H1 (cell line): ENCODE measurements at regions of chr12 and their contacts with region 1.

Region 1: GRCh38 chr12:54993161-54993835 is 8.7 kb upstream of the TESPA1 start:
- DNase-seq: peak in 1 of 2 experiments; percentile 55
- H3K4me3 ChIP-seq: no peak overlapping the region
- H3K27ac ChIP-seq: no peak overlapping the region
- H3K4me1 ChIP-seq: peaks cover 1 to 11% (median 7%) of the 10 kb centered on the region in 4 experiments; a peak in 5 of 7 replicates
- H3K27me3 ChIP-seq: no peaks in the 10 kb centered on the region
- CTCF ChIP-seq: peak in 2 of 3 experiments; percentile 75 to 88; a peak in 3 of 4 replicates
- EP300 ChIP-seq: no peak
- POLR2A ChIP-seq: no peak
- RAD21 ChIP-seq: peak; percentile 94 to 97

Region 2: GRCh38 chr12:54749191-54749818 is 244.0 kb before region 1 on chr12:
- CTCF ChIA-PET with region 1: interaction called, 24 read pairs
- POLR2A ChIA-PET with region 1: no interaction called
- DNase-seq: no peak
- H3K4me3 ChIP-seq: no peak overlapping the region
- H3K27ac ChIP-seq: no peak overlapping the region
- H3K4me1 ChIP-seq: no peaks in the 10 kb centered on the region
- H3K27me3 ChIP-seq: no peaks in the 10 kb centered on the region
- CTCF ChIP-seq: peak in 2 of 3 experiments; percentile 52 to 71; a peak in 2 of 4 replicates
- EP300 ChIP-seq: no peak
- POLR2A ChIP-seq: no peak
- RAD21 ChIP-seq: peak; percentile 79 to 81

Region 3: DNA sequence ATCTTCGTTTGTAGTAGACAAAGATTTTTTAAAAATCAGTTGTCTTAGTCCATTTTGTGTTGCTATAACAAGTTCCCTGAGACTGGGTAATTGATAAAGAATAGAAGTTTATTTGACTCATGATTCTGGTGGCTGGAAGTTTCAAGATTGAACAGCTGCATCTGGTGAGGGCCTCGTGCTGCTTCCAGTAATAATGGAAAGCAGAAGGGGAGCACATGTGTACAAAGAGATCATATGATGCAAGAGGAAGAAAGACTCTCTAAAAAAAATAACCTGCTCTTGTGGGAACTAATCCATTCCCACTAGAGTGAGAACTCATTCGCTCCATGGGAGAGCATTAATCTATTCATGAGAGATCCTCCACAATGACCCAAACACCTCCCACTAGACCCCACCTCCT is 114.1 kb before region 1 on chr12:
- CTCF ChIA-PET with region 1: no interaction called
- POLR2A ChIA-PET with region 1: no interaction called
- DNase-seq: no peak
- H3K4me3 ChIP-seq: no peak overlapping the region
- H3K27ac ChIP-seq: no peak overlapping the region
- H3K4me1 ChIP-seq: no peaks in the 10 kb centered on the region
- H3K27me3 ChIP-seq: no peaks in the 10 kb centered on the region
- CTCF ChIP-seq: no peak
- EP300 ChIP-seq: no peak
- POLR2A ChIP-seq: no peak
- RAD21 ChIP-seq: no peak

Region 4: DNA sequence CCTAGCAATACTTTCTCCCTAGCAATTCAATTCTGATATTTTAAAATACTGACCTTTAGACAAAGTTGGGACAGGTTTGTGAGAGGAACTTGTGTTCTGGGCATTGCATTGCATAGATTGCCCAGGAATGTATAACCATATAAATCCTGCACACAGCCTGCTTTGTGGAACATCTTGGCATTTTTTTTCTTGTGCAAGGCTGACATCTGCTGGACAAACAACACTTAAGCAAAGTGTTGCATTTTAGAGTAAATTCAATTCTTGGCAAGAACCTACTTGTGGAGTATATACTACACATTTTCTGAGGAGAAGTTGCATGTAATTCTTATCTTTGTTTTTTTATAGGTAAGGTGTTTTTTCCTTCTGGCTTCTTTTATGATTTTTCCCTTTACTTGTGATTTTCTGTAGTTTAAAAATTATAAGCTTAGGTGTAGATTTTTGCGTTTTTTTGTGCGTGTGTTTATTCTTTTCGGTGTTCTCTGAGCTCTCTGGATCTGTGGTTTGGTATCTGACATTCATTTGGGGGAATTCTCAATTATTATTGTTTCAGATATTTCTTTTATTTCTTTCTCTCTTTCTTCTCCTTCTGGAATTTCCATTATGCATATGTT is 35.1 kb before region 1 on chr12:
- CTCF ChIA-PET with region 1: interaction called, 14 read pairs
- POLR2A ChIA-PET with region 1: no interaction called
- DNase-seq: no peak
- H3K4me3 ChIP-seq: no peak overlapping the region
- H3K27ac ChIP-seq: no peak overlapping the region
- H3K4me1 ChIP-seq: peaks cover 0 to 5% (median 0%) of the 10 kb centered on the region in 4 experiments; a peak in 2 of 7 replicates
- H3K27me3 ChIP-seq: no peaks in the 10 kb centered on the region
- CTCF ChIP-seq: peak in 2 of 3 experiments; percentile 61 to 70; a peak in 2 of 4 replicates
- EP300 ChIP-seq: no peak
- POLR2A ChIP-seq: no peak
- RAD21 ChIP-seq: peak; percentile 94 to 97

Region 5: DNA sequence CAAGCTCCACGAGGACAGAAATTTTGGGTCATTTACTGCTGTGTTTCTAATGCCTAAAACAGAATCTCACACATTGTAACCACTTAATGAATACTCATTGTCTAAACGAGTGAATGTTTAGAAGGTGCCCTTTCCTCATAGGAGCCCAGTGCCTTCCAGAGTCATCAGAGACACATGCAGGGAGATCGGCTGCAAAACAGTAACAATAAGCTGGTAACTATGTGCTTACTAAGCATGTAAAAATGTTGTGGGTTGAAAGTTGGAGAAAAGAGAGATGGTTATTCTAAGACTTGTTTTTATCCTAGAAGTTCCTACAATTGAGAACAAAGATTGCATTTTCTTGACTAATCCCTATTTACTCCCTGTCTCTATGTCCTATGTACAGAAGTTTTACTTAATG is 16.1 kb before region 1 on chr12:
- CTCF ChIA-PET with region 1: interaction called, 39 read pairs
- POLR2A ChIA-PET with region 1: no interaction called
- DNase-seq: no peak
- H3K4me3 ChIP-seq: no peak overlapping the region
- H3K27ac ChIP-seq: no peak overlapping the region
- H3K4me1 ChIP-seq: peaks cover 0 to 4% (median 1%) of the 10 kb centered on the region in 4 experiments; a peak in 1 of 7 replicates
- H3K27me3 ChIP-seq: no peaks in the 10 kb centered on the region
- CTCF ChIP-seq: no peak
- EP300 ChIP-seq: no peak
- POLR2A ChIP-seq: no peak
- RAD21 ChIP-seq: no peak

Region 6: DNA sequence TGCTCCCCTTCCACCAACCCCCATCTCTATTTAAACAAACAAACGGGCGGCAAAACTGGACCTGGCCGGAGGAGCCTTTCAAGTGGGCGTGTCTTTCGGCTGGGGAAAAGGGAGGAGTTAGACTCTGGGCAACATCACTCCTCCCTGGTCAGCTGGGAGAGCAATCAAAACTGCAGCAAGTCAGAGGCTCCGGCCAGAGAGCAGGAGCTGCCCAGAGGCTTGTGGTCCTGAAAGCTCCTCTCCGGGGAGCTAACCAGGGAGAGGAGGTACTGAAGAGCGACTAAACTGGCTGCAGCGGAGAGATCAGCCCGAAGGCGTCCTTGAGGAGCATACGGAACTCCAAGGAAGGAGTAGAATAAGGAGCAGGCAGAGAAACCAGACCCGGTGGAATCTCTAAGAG is 26.5 kb after region 1 on chr12 and contains the start of gene NEUROD4:
- CTCF ChIA-PET with region 1: interaction called, 13 read pairs
- POLR2A ChIA-PET with region 1: interaction called, 5 read pairs
- DNase-seq: peak; percentile 80 to 83
- H3K4me3 ChIP-seq: peak within 1 kb of the TSS; percentile 22 to 49 (median 27); a peak in 6 of 8 replicates
- H3K27ac ChIP-seq: no peak within 1 kb of the TSS
- H3K4me1 ChIP-seq: peaks cover 0 to 2% (median 0%) of the 10 kb centered on the region in 4 experiments; a peak in 2 of 7 replicates
- H3K27me3 ChIP-seq: no peaks in the 10 kb centered on the region
- CTCF ChIP-seq: no peak
- EP300 ChIP-seq: 0 out of 3 replicates have a peak, but pooled peaks of 1 of the 2 experiments have one; percentile 6
- POLR2A ChIP-seq: 0 out of 3 replicates have a peak, but pooled peaks of 1 of the 2 experiments have one; percentile 24
- RAD21 ChIP-seq: peak in 1 of 2 experiments; percentile 21; a peak in 1 of 4 replicates
- total RNA-seq, gene NEUROD4: not detected in 2 replicates

Region 7: GRCh38 chr12:55051197-55051933 is 58.1 kb after region 1 on chr12:
- CTCF ChIA-PET with region 1: interaction called, 16 read pairs
- POLR2A ChIA-PET with region 1: no interaction called
- DNase-seq: no peak
- H3K4me3 ChIP-seq: no peak overlapping the region
- H3K27ac ChIP-seq: no peak overlapping the region
- H3K4me1 ChIP-seq: no peaks in the 10 kb centered on the region
- H3K27me3 ChIP-seq: no peaks in the 10 kb centered on the region
- CTCF ChIP-seq: peak; percentile 36 to 56 (median 40)
- EP300 ChIP-seq: no peak
- POLR2A ChIP-seq: no peak
- RAD21 ChIP-seq: peak; percentile 23 to 56; a peak in 3 of 4 replicates